Aorta (tissue), 5 donors: ENCODE measurements at regions of chr10 and their contacts with region 1.

Region 1: DNA sequence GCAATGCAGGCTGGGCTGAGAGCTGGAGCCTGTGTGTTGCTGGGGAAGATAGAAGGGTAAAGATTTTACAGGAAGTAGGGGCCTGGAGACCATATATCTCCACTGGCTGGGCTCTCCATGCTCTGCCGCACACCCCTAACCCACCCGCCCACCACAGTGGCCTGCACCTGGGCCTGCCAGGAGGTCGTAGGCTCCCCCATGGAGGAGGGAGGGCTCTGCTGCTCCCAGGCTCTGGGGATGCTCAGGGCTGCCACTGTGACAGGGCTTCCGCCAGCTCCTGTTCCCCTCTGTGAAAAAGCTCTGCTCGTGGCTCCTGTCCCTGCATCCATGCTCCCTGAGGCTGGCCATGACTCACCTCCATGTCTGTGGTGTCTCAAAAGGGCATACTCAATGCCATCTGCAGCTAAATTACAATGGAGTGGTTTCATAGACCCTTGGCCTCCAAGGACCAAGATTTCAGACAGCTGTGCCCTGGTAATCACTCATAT is 106.0 kb downstream of the CXCL12 start:
- DNase-seq: no peak
- ATAC-seq: peak; percentile 9
- H3K4me3 ChIP-seq: no peak overlapping the region
- H3K27ac ChIP-seq: no peak overlapping the region
- H3K4me1 ChIP-seq: no peaks in the 10 kb centered on the region
- H3K27me3 ChIP-seq: no peaks in the 10 kb centered on the region

Region 2: GRCh38 chr10:44125879-44126278 is 153.0 kb before region 1 on chr10:
- intact Hi-C with region 1: loop called in 1 of 2 experiments (anchors 10 kb)
- DNase-seq: no peak
- ATAC-seq: no peak
- H3K4me3 ChIP-seq: no peak overlapping the region
- H3K27ac ChIP-seq: no peak overlapping the region
- H3K4me1 ChIP-seq: no peaks in the 10 kb centered on the region
- H3K27me3 ChIP-seq: no peaks in the 10 kb centered on the region

Region 3: DNA sequence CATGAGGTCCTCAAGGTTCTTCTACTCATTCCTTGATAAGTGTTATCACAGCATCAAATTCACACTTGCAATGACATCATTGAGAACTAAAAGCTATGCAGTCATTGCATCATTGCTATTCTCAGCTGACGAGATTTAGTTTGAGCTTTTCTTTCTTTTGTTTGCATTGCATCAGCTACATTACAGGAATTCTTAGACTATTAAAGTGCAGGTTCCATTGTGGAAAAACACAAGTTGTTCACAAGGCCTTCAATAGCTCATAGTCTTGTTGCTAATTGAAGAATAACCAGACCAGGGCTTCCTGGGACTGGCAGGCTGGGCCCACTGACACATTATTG is 33.3 kb before region 1 on chr10:
- intact Hi-C with region 1: no loop called
- DNase-seq: no peak
- ATAC-seq: no peak
- H3K4me3 ChIP-seq: no peak overlapping the region
- H3K27ac ChIP-seq: no peak overlapping the region
- H3K4me1 ChIP-seq: no peaks in the 10 kb centered on the region
- H3K27me3 ChIP-seq: no peaks in the 10 kb centered on the region

Region 4: GRCh38 chr10:44478876-44479705 is 200.2 kb after region 1 on chr10:
- intact Hi-C with region 1: no loop called
- DNase-seq: no peak
- ATAC-seq: no peak
- H3K4me3 ChIP-seq: no peak overlapping the region
- H3K27ac ChIP-seq: no peak overlapping the region
- H3K4me1 ChIP-seq: peaks cover 0 to 4% of the 10 kb centered on the region in 2 donors
- H3K27me3 ChIP-seq: no peaks in the 10 kb centered on the region